ENCODE measurements at regions of chr16 and their contacts with region 1.

Region 1: DNA sequence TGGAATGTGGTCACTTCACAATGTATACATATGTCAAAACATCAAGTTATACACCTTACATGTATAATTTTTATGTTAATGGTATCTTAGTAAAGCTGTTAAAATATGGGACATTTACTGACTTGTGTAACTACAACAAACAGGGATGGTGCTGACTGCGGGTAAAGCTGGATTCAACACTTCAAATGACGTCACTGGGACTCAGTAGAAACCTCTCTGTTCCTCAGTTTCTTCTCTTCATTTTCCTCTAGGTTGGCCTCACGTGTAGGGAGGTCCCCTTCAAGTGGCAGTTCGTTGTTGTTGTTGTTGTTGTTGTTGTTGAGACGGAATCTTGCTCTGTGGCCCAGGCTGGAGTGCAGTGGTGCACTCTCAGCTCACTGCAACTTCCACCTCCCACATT is 182.9 kb downstream of the RBFOX1 start:
- DNase-seq: no peak
- ATAC-seq: no peak
- H3K4me3 ChIP-seq: no peak overlapping the region
- H3K27ac ChIP-seq: no peak overlapping the region
- H3K4me1 ChIP-seq: no peaks in the 10 kb centered on the region
- H3K27me3 ChIP-seq: no peaks in the 10 kb centered on the region
- CTCF ChIP-seq: no peak

Region 2: DNA sequence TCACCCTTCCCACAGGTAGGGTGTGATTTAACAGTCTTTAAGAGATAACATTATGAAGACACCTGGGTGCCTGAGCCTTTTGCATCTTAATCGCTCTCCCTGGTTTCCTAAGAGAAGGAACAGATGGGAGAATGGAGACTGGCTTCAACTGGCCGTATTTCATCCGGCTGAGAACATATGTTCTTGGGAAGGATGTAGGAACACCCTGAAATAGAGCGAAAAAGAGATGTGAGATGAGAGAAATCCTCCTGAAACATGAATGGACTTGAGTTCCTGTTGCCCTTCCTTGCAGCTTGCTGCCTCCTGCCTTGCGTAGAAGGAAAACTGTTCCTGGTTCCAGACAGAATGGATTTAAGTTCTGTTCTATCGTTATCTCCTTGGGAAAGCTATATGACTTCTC is 568.3 kb before region 1 on chr16:
- CTCF ChIA-PET with region 1: no interaction called
- POLR2A ChIA-PET with region 1: no interaction called
- in situ Hi-C with region 1: no loop called
- intact Hi-C with region 1: no loop called
- DNase-seq: no peak
- ATAC-seq: no peak
- H3K4me3 ChIP-seq: no peak overlapping the region
- H3K27ac ChIP-seq: no peak overlapping the region
- H3K4me1 ChIP-seq: no peaks in the 10 kb centered on the region
- H3K27me3 ChIP-seq: no peaks in the 10 kb centered on the region
- CTCF ChIP-seq: no peak

Region 3: DNA sequence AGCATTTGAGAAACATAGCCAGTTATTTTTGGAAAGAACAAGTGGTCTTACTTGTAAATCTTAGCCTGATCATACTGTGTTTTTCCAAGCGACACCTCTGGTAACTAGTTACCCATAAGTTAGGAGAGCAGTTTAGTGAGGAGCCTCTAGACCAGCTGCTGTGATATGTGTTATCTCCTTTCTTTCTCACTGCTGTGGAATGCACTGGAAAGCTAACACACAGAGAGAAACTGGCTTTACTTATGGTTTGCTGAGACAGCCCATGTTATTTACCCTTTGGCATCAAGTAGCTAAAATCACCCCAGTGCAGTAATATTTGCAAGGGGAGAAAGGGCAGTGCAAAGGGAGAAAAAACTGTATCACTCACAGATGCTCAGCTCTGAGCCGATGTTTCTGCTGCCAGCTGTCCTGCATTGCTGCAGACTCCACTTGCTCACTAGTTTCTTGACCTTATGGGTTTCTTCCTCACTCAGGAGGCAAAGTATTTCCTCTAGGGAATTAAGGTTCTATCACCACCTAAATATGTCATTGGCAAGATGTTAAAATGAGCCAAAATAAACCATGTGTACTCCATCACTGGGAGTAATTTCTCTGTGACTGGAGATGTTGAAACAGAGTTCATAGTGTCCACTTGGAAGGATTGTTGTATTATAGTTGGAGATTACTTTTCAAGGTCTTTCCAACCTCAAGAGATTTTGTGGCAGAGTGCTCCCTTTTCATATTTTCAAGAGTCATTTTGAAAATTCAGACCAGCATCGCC is 180.6 kb before region 1 on chr16:
- CTCF ChIA-PET with region 1: no interaction called
- POLR2A ChIA-PET with region 1: no interaction called
- in situ Hi-C with region 1: no loop called
- intact Hi-C with region 1: no loop called
- DNase-seq: no peak
- ATAC-seq: no peak
- H3K4me3 ChIP-seq: no peak overlapping the region
- H3K27ac ChIP-seq: no peak overlapping the region
- H3K4me1 ChIP-seq: no peaks in the 10 kb centered on the region
- H3K27me3 ChIP-seq: peaks cover 7% of the 10 kb centered on the region; the same call in 1 of the 2 replicates
- CTCF ChIP-seq: no peak

Region 4: DNA sequence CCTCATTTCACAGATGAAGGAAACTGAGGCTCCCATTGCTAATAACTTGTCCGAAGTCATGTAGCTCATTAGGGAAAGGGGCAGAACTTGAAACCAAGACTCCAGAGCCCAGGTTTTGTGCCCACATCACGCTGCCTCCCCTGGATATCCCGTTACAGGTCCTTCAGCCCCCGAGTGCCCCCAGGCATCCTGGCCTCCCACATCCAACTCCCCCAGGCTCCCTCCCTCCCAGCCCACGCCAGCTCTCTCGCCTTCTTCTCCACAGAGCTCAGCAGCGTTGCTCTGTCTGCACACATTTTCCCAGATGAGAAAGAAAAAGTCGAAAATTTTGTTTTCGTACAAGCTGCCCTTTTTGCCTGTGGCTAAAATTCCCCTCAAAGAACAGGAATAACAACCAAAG is 1091.7 kb after region 1 on chr16:
- CTCF ChIA-PET with region 1: no interaction called
- POLR2A ChIA-PET with region 1: interaction called, 10 read pairs
- in situ Hi-C with region 1: no loop called
- intact Hi-C with region 1: no loop called
- DNase-seq: no peak
- ATAC-seq: no peak
- H3K4me3 ChIP-seq: no peak overlapping the region
- H3K27ac ChIP-seq: no peak overlapping the region
- H3K4me1 ChIP-seq: no peaks in the 10 kb centered on the region
- H3K27me3 ChIP-seq: peaks cover 20% of the 10 kb centered on the region
- CTCF ChIP-seq: no peak

Measured in Panc1 (cell line).